Prostate gland (tissue), 2 donors: ENCODE measurements at regions of chr4 and their contacts with region 1.

Region 1: DNA sequence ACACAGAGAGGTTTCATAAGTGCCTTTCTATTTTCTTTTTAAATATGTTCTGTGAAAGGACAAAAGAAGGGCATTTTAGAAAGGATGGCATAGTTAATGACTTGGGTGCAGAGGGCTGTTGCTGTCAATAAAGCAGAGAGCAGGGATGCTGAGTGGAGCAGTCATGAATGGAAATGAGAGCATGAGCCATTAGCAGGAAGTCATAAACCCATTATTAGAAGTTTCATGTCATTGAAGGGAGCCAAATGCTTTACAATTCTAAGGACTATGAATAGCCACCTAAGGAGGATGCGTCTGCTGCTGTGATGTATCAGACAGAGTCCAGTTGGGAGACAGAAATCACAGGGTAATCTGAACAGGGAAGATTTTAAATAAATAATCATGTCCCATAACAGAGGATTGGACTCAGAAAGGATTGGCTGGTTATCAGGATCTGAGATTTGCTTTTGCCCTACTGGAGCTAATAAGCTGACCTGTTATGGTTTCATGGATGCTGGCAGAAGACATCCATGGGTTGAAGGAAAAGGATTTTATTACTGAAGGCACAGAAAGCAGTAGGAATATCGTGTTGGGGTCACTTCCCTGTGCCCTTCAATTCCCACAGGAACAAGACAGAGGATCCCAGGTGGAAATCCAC is 47.5 kb upstream of the WDR19 start:
- DNase-seq: no peak
- H3K4me3 ChIP-seq: no peak overlapping the region
- H3K27ac ChIP-seq: no peak overlapping the region
- H3K4me1 ChIP-seq: peaks cover 4% of the 10 kb centered on the region
- H3K27me3 ChIP-seq: no peaks in the 10 kb centered on the region
- CTCF ChIP-seq: no peak
- POLR2A ChIP-seq: no peak

Region 2: GRCh38 chr4:38768968-38769394 is 365.8 kb before region 1 on chr4:
- intact Hi-C with region 1: loop called (anchors 10 kb)
- DNase-seq: no peak
- H3K4me3 ChIP-seq: no peak overlapping the region
- H3K27ac ChIP-seq: no peak overlapping the region
- H3K4me1 ChIP-seq: no peaks in the 10 kb centered on the region
- H3K27me3 ChIP-seq: no peaks in the 10 kb centered on the region
- CTCF ChIP-seq: no peak
- POLR2A ChIP-seq: no peak

Region 3: DNA sequence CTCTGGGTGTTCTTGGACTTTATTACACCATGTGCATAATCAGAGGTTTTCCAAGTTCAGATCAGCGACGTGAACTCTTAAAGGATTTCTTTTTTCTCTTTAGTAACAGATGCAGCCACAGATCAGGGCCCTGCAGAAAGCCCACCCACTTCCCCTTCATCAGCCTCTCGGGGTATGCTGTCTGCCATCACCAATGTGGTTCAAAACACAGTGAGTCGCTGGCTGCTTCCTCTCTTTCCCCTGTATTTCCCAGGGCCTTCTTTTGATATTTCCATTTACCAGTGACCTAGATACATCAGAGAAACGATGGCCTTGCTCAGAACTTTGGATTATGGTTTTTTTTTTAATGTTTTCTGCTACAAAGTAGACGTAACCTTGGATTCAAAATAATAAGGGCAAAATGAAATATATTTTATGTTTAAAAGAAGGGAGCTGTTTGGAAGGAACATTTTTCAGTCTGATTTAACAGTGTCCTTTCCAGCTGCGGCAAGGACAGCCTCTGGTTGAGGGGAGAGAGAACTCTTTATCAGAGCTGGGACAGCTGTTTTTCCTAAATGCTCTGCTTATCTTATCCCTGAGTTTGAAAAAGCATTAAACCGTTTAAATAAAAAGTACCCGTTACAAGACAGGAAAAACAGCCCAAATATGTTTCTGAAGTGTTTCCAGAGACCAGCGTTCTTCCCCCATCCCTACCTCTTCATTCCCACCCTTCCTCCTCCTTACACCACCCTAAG is 229.0 kb before region 1 on chr4:
- intact Hi-C with region 1: loop called (anchors 2 kb)
- DNase-seq: no peak
- H3K4me3 ChIP-seq: no peak overlapping the region
- H3K27ac ChIP-seq: no peak overlapping the region
- H3K4me1 ChIP-seq: no peaks in the 10 kb centered on the region
- H3K27me3 ChIP-seq: no peaks in the 10 kb centered on the region
- CTCF ChIP-seq: no peak
- POLR2A ChIP-seq: no peak

Region 4: DNA sequence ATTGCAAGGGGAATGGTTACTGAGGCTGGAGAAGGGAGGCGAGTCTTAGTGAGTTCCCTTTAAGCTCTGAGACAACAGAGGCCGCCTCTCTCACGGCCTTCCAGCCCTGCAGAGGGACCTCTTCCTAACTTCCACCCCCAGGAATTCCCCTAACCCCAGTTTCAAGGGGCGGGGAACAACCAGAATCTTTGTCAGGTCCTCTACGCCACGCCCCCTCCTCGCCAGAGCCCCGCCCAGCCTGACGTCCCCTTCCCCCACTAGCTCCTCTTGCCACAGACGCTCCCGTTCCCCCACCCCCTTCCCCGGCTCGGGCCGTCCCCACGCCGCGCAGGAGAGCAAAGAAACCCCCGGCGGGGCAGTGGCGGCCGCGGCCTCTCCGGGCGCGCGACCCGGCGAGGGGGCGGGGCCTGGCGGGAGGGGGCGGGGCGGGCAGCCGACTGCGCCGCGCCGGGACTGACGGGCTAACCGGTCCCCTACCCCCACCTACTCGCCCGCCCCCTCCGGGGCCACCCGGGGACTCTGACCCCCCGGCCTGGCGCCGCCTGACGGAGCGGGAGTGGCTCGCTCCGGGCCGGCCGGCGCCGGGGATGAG is 90.3 kb before region 1 on chr4:
- intact Hi-C with region 1: no loop called
- DNase-seq: peak; percentile 82
- H3K4me3 ChIP-seq: peak overlapping the region; percentile 76 to 90
- H3K27ac ChIP-seq: peak overlapping the region; percentile 83 to 93
- H3K4me1 ChIP-seq: no peaks in the 10 kb centered on the region
- H3K27me3 ChIP-seq: no peaks in the 10 kb centered on the region
- CTCF ChIP-seq: no peak
- POLR2A ChIP-seq: peak; percentile 30